Endothelial cell of umbilical vein (primary cell): ENCODE measurements at regions of chr18 and their contacts with region 1.

Region 1: GRCh38 chr18:35497370-35498197 is at the start of gene INO80C:
- DNase-seq: peak; percentile 96
- H3K4me3 ChIP-seq: peak within 1 kb of the TSS; percentile 60 to 89 (median 73)
- H3K27ac ChIP-seq: peak within 1 kb of the TSS; percentile 93
- H3K4me1 ChIP-seq: peaks cover 23% of the 10 kb centered on the region
- H3K27me3 ChIP-seq: no peaks in the 10 kb centered on the region
- CTCF ChIP-seq: no peak
- POLR2A ChIP-seq: peak; percentile 88
- total RNA-seq, gene INO80C: 51.4 and 56.0 TPM in 2 replicates

Region 2: GRCh38 chr18:35231052-35231451 is 266.5 kb before region 1 on chr18:
- CTCF ChIA-PET with region 1: no interaction called
- POLR2A ChIA-PET with region 1: no interaction called
- dilution Hi-C with region 1: no loop called
- intact Hi-C with region 1: loop called (anchors 5 kb)
- DNase-seq: peak; percentile 79
- H3K4me3 ChIP-seq: no peak overlapping the region
- H3K27ac ChIP-seq: no peak overlapping the region
- H3K4me1 ChIP-seq: no peaks in the 10 kb centered on the region
- H3K27me3 ChIP-seq: no peaks in the 10 kb centered on the region
- CTCF ChIP-seq: peak; percentile 78 to 82
- POLR2A ChIP-seq: no peak

Region 3: GRCh38 chr18:35478520-35479435 is 18.8 kb before region 1 on chr18:
- CTCF ChIA-PET with region 1: interaction called, 23 read pairs
- POLR2A ChIA-PET with region 1: interaction called, 10 read pairs
- dilution Hi-C with region 1: no loop called
- intact Hi-C with region 1: loop called (anchors 2 kb)
- DNase-seq: peak; percentile 81
- H3K4me3 ChIP-seq: peak overlapping the region in 2 of 3 experiments; percentile 46 to 47
- H3K27ac ChIP-seq: peak overlapping the region; percentile 90
- H3K4me1 ChIP-seq: peaks cover 45% of the 10 kb centered on the region
- H3K27me3 ChIP-seq: no peaks in the 10 kb centered on the region
- CTCF ChIP-seq: no peak
- POLR2A ChIP-seq: no peak